ENCODE measurements at regions of chr2 and their contacts with region 1.

Region 1: GRCh38 chr2:231612179-231613053 is 19.8 kb downstream of the TEX44 start:
- DNase-seq: peak; percentile 87 to 88
- H3K4me3 ChIP-seq: no peak overlapping the region; the same call in 1 of the 2 replicates
- H3K4me3 Mint-ChIP-seq: peak overlapping the region; percentile 76
- H3K27ac Mint-ChIP-seq: peak overlapping the region; percentile 94
- H3K4me1 ChIP-seq: peaks cover 42% of the 10 kb centered on the region
- H3K4me1 Mint-ChIP-seq: peaks cover 29% of the 10 kb centered on the region
- H3K27me3 ChIP-seq: no peaks in the 10 kb centered on the region
- H3K27me3 Mint-ChIP-seq: no peaks in the 10 kb centered on the region
- CTCF ChIP-seq: peak; percentile 82 to 83

Region 2: DNA sequence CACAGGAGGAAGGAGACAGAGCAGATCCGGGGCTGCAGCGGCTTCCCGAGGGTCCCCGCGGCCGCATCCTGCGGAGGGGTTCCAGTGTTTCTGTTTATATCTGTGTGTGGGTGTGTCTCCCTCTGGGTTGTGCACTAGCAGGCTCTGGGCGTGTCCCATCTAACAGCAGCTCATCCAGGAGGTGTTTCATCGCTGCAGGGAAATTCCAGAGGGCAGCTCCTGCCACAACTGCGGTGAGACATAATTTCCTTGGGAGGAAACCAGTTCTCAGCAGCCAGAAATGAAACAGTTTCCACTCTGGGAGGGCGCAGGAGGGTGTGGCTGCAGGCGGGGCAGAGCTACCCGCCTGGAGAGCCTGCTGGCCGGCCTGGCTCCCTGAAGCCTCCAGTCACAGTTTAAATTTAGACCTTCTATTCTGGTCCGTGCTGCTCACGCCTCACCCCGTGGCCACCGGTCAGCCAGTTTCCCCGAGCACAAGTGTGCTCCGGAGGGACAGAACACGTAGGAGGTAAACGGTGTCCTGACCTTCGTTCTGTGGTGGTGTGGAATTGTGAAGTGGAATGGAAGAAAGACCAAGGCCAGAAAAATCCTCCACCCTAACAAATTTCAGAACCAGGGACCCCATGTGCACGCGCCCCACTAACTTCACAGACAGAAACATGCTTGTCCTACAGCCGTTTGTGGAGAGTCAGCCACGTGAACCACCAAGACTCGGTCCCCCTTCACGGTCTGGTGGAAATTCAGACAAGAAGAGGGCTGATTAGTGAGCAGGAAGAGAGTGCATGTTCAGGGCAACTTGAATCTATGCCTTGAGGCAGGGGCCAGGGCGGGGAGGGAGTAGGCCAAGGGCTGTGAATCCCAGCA is 30.4 kb after region 1 on chr2:
- CTCF ChIA-PET with region 1: interaction called, 13 read pairs
- POLR2A ChIA-PET with region 1: interaction called, 5 read pairs
- intact Hi-C with region 1: loop called (anchors 1 kb)
- DNase-seq: peak; percentile 77 to 89
- H3K4me3 ChIP-seq: no peak overlapping the region
- H3K4me3 Mint-ChIP-seq: peak overlapping the region; percentile 66
- H3K27ac Mint-ChIP-seq: peak overlapping the region; percentile 92
- H3K4me1 ChIP-seq: peaks cover 8% of the 10 kb centered on the region
- H3K4me1 Mint-ChIP-seq: peaks cover 6% of the 10 kb centered on the region
- H3K27me3 ChIP-seq: no peaks in the 10 kb centered on the region
- H3K27me3 Mint-ChIP-seq: no peaks in the 10 kb centered on the region
- CTCF ChIP-seq: no peak

Region 3: GRCh38 chr2:231674587-231675338 is 62.3 kb after region 1 on chr2:
- CTCF ChIA-PET with region 1: interaction called, 23 read pairs
- POLR2A ChIA-PET with region 1: interaction called, 14 read pairs
- intact Hi-C with region 1: loop called (anchors 1 kb)
- DNase-seq: peak; percentile 76 to 82
- H3K4me3 ChIP-seq: no peak overlapping the region
- H3K4me3 Mint-ChIP-seq: no peak overlapping the region
- H3K27ac Mint-ChIP-seq: peak overlapping the region; percentile 45
- H3K4me1 ChIP-seq: peaks cover 49% of the 10 kb centered on the region
- H3K4me1 Mint-ChIP-seq: peaks cover 19% of the 10 kb centered on the region
- H3K27me3 ChIP-seq: no peaks in the 10 kb centered on the region
- H3K27me3 Mint-ChIP-seq: no peaks in the 10 kb centered on the region
- CTCF ChIP-seq: peak; percentile 63 to 81

Region 4: GRCh38 chr2:231706731-231707624 is 94.6 kb after region 1 on chr2:
- CTCF ChIA-PET with region 1: interaction called, 11 read pairs
- POLR2A ChIA-PET with region 1: interaction called, 20 read pairs
- intact Hi-C with region 1: no loop called
- DNase-seq: peak; percentile 95 to 97
- H3K4me3 ChIP-seq: peak overlapping the region; percentile 73
- H3K4me3 Mint-ChIP-seq: peak overlapping the region; percentile 88
- H3K27ac Mint-ChIP-seq: peak overlapping the region; percentile 99
- H3K4me1 ChIP-seq: no peaks in the 10 kb centered on the region
- H3K4me1 Mint-ChIP-seq: peaks cover 7% of the 10 kb centered on the region
- H3K27me3 ChIP-seq: no peaks in the 10 kb centered on the region
- H3K27me3 Mint-ChIP-seq: no peaks in the 10 kb centered on the region
- CTCF ChIP-seq: peak; percentile 52 to 85

Region 5: GRCh38 chr2:231780909-231781797 is 168.7 kb after region 1 on chr2 and contains the start of gene PDE6D:
- CTCF ChIA-PET with region 1: no interaction called
- POLR2A ChIA-PET with region 1: no interaction called
- intact Hi-C with region 1: loop called (anchors 5 kb)
- DNase-seq: peak; percentile 97
- H3K4me3 ChIP-seq: peak within 1 kb of the TSS; percentile 76
- H3K4me3 Mint-ChIP-seq: peak within 1 kb of the TSS; percentile 92
- H3K27ac Mint-ChIP-seq: peak within 1 kb of the TSS; percentile 53
- H3K4me1 ChIP-seq: no peaks in the 10 kb centered on the region
- H3K4me1 Mint-ChIP-seq: peaks cover 4% of the 10 kb centered on the region
- H3K27me3 ChIP-seq: no peaks in the 10 kb centered on the region
- H3K27me3 Mint-ChIP-seq: no peaks in the 10 kb centered on the region
- CTCF ChIP-seq: no peak
- total RNA-seq, gene PDE6D: 8.1 and 9.1 TPM in 2 replicates